Activated CD4-positive, alpha-beta memory T cell treated with anti-CD3 and anti-CD28 coated beads for 36 hours (primary cell): ENCODE measurements at regions of chr4 and their contacts with region 1.

Region 1: DNA sequence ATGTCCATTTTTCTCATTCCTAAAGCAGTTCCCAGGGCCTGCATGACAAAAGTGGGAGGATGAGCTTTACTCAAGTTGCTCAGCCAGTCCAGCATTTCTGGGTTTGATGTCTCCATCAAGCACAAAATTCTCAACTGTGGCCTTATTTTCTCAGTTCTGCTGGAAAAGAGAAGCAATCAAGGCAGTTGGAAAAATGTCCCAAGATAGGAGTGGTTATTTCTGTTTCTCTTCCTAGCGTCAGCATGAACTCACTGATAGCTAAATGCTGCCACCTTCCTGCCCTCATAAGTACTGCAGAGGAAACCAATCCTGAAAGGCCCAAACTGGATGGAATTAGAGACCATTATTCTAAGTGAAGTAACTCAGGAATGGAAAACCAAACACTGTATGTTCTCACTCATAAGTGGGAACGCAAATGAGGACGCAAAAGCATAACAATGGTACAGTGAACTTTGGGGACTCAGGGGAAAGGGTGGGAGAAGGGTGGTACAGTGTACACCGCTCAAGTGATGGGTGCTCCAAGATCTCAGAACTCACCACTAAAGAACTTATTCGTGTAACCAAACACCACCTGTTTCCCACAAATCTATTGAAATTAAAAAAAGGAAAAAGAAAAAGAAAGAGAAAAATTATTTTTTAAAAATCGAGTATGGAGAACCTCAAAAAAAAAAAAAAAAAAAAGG is 29.6 kb downstream of the ADH7 start:
- DNase-seq: peak; percentile 66
- H3K4me3 Mint-ChIP-seq: no peak overlapping the region
- H3K27ac Mint-ChIP-seq: no peak overlapping the region
- H3K4me1 Mint-ChIP-seq: peaks cover 18% of the 10 kb centered on the region
- H3K27me3 Mint-ChIP-seq: peaks cover 2% of the 10 kb centered on the region

Region 2: GRCh38 chr4:98150092-98150761 is 1255.3 kb before region 1 on chr4:
- CTCF ChIA-PET with region 1: no interaction called
- POLR2A ChIA-PET with region 1: no interaction called
- intact Hi-C with region 1: loop called (anchors 5 kb)
- DNase-seq: no peak
- H3K4me3 Mint-ChIP-seq: no peak overlapping the region
- H3K27ac Mint-ChIP-seq: no peak overlapping the region
- H3K4me1 Mint-ChIP-seq: peaks cover 5% of the 10 kb centered on the region
- H3K27me3 Mint-ChIP-seq: no peaks in the 10 kb centered on the region

Region 3: GRCh38 chr4:98363431-98363830 is 1042.1 kb before region 1 on chr4:
- CTCF ChIA-PET with region 1: no interaction called
- POLR2A ChIA-PET with region 1: no interaction called
- intact Hi-C with region 1: no loop called
- DNase-seq: no peak
- H3K4me3 Mint-ChIP-seq: no peak overlapping the region
- H3K27ac Mint-ChIP-seq: no peak overlapping the region
- H3K4me1 Mint-ChIP-seq: no peaks in the 10 kb centered on the region
- H3K27me3 Mint-ChIP-seq: no peaks in the 10 kb centered on the region

Region 4: DNA sequence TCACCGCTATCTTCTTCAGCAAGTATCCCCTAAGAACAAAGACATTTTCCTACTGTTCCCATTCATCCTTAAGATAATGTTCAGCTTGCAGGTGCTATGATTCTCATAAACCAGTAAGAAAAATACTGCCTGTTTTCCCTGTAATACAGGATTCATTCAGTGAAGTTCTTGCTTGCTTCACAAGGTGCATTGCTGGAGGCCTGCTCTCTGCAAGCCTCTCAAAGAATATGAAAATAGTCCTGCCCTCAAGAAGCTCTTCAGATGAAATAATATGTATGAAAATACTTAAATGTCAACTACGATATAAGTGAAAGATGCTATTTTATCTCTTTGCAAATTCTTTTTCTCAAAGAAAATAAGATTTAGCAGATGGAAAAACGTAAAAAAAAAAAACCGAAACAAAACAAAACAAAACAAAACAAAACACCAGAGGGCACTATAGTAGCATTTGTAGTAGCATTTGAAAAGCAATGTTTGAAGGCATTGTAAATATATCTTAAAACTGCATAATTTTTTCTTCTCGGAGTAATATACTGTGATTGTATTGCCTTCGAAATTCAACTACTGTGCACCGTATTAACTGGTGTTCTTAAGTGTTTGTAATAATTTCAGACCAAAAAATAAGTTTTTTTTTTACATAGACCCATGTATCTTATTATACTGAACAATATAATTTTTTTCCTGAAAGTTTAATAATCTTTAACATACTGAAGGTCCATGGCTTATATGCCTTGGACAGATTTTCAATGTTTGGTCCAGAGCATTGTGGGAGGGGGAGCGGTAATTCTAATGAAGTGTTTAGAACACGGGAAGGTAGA is 287.5 kb before region 1 on chr4:
- CTCF ChIA-PET with region 1: interaction called, 4 read pairs
- POLR2A ChIA-PET with region 1: no interaction called
- intact Hi-C with region 1: loop called (anchors 1 kb)
- DNase-seq: no peak
- H3K4me3 Mint-ChIP-seq: no peak overlapping the region
- H3K27ac Mint-ChIP-seq: no peak overlapping the region
- H3K4me1 Mint-ChIP-seq: peaks cover 2% of the 10 kb centered on the region
- H3K27me3 Mint-ChIP-seq: peaks cover 1% of the 10 kb centered on the region